H1 (cell line): ENCODE measurements at regions of chr9 and their contacts with region 1.

Region 1: GRCh38 chr9:34701769-34702736 is 7.9 kb downstream of the CCL21 start:
- DNase-seq: peak; percentile 21 to 92
- H3K4me3 ChIP-seq: peak overlapping the region; percentile 38 to 65 (median 45)
- H3K27ac ChIP-seq: no peak overlapping the region
- H3K4me1 ChIP-seq: peaks cover 0 to 5% (median 2%) of the 10 kb centered on the region in 4 experiments; a peak in 2 of 7 replicates
- H3K27me3 ChIP-seq: peaks cover 0 to 30% (median 18%) of the 10 kb centered on the region in 4 experiments; a peak in 6 of 7 replicates
- CTCF ChIP-seq: peak; percentile 97 to 98 (median 98)
- EP300 ChIP-seq: no peak
- POLR2A ChIP-seq: no peak
- RAD21 ChIP-seq: peak; percentile 77 to 81

Region 2: GRCh38 chr9:34463098-34463900 is 238.8 kb before region 1 on chr9:
- CTCF ChIA-PET with region 1: no interaction called
- POLR2A ChIA-PET with region 1: no interaction called
- DNase-seq: no peak
- H3K4me3 ChIP-seq: no peak overlapping the region
- H3K27ac ChIP-seq: no peak overlapping the region
- H3K4me1 ChIP-seq: peaks cover 0 to 5% (median 1%) of the 10 kb centered on the region in 4 experiments; a peak in 3 of 7 replicates
- H3K27me3 ChIP-seq: peaks cover 0 to 2% (median under 1%) of the 10 kb centered on the region in 4 experiments; a peak in 2 of 7 replicates
- CTCF ChIP-seq: no peak
- EP300 ChIP-seq: no peak
- POLR2A ChIP-seq: no peak
- RAD21 ChIP-seq: no peak

Region 3: DNA sequence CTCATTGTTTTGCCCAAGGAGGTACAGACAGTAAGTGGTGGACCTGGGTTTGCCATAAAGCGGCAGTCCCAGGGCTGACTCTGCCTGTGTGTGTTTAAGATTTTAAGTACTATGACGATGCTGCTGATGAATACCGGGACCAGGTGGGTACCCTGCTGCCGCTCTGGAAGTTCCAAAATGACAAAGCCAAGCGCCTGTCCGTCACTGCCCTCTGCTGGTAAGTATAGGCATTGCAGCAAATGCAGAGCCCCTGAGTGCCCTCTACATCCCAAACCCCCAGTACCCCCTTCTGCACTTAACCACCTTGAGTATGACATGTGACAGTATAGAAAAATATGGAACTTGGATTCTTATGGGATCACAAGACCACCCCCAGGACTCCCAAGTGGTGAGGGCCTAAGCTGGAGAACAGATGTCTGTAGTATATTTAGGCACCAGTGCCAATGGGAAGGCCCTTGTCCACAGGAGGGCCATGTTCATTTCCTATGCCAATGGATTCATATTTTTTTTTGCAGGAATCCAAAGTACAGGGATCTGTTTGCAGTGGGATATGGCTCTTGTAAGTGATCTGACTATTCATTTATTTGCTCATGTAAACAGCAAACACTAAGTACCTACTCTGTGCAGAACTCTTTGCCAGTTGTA is 201.3 kb before region 1 on chr9:
- CTCF ChIA-PET with region 1: no interaction called
- POLR2A ChIA-PET with region 1: no interaction called
- DNase-seq: peak in 1 of 2 experiments; percentile 91
- H3K4me3 ChIP-seq: no peak overlapping the region
- H3K27ac ChIP-seq: no peak overlapping the region
- H3K4me1 ChIP-seq: 0 out of 7 replicates have a peak, but pooled peaks cover 0 to 3% (median 0%) of the 10 kb centered on the region in 4 experiments
- H3K27me3 ChIP-seq: no peaks in the 10 kb centered on the region; a peak in 1 of 7 replicates
- CTCF ChIP-seq: peak; percentile 90 to 97 (median 96)
- EP300 ChIP-seq: no peak
- POLR2A ChIP-seq: no peak
- RAD21 ChIP-seq: peak; percentile 92 to 93

Region 4: DNA sequence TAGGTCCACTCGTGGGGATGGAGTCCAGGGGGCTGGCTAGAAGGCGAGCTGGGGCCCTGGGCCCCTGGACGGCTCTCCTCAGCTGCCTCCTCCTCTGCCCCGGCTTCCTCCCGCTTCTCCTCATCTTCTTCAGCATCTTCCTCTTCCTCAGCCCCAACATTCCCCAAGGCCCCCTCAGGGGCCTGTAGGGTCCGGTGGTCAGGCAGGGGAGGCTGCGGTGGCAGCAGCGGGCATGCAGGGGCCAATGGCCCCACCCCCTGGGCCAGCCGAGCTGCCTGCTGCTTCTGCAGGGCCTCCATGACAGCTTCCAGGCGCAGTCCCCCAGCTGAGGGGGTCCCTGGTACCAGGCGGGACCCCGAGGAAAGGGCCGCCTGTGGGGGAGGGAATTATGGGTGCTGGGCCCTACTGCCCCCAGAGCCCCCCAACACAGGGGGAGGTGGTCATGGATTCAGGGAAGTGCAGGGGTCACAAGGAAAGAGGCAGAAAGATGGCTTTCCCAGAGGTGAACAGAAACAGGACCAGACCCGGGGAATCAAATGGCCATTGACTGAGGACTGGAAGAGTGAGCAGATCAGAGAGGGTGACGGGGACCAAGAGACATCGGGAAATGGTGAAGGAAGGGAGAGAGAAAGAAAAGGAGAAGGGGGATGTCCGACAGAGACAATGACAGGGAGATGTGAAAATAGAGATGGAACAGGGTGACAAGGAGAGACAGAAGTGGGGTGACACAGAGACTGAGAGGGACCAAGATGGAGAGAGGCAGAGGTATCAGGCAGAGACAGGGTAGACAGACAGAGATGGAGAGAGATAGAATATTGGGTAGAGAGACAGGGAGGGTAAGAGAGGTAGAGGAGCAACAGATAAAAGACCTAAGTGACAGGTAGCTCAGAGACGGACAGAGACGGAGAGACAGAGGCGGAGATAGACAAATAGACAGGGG is 74.1 kb before region 1 on chr9:
- CTCF ChIA-PET with region 1: no interaction called
- POLR2A ChIA-PET with region 1: no interaction called
- DNase-seq: no peak
- H3K4me3 ChIP-seq: peak overlapping the region; percentile 9 to 59 (median 40)
- H3K27ac ChIP-seq: no peak overlapping the region
- H3K4me1 ChIP-seq: peaks cover 0 to 16% (median 6%) of the 10 kb centered on the region in 4 experiments; a peak in 6 of 7 replicates
- H3K27me3 ChIP-seq: peaks cover 62 to 84% (median 82%) of the 10 kb centered on the region in 4 experiments
- CTCF ChIP-seq: no peak
- EP300 ChIP-seq: no peak
- POLR2A ChIP-seq: no peak
- RAD21 ChIP-seq: no peak

Region 5: GRCh38 chr9:34665381-34666250 is 36.4 kb before region 1 on chr9:
- CTCF ChIA-PET with region 1: interaction called, 27 read pairs
- POLR2A ChIA-PET with region 1: no interaction called
- DNase-seq: peak; percentile 80 to 95
- H3K4me3 ChIP-seq: peak overlapping the region; percentile 59 to 92 (median 81)
- H3K27ac ChIP-seq: peak overlapping the region; percentile 88
- H3K4me1 ChIP-seq: peaks cover 0 to 4% (median 2%) of the 10 kb centered on the region in 4 experiments; a peak in 2 of 7 replicates
- H3K27me3 ChIP-seq: peaks cover 0 to 5% (median 0%) of the 10 kb centered on the region in 4 experiments; a peak in 2 of 7 replicates
- CTCF ChIP-seq: 0 out of 4 replicates have a peak, but pooled peaks of 1 of the 3 experiments have one; percentile 5
- EP300 ChIP-seq: no peak
- POLR2A ChIP-seq: peak in 1 of 2 experiments; percentile 83; a peak in 2 of 3 replicates
- RAD21 ChIP-seq: no peak

Region 6: GRCh38 chr9:34686231-34686630 is 15.8 kb before region 1 on chr9:
- CTCF ChIA-PET with region 1: interaction called, 147 read pairs
- POLR2A ChIA-PET with region 1: interaction called, 3 read pairs
- DNase-seq: no peak
- H3K4me3 ChIP-seq: no peak overlapping the region
- H3K27ac ChIP-seq: no peak overlapping the region
- H3K4me1 ChIP-seq: peaks cover 0 to 3% (median 1%) of the 10 kb centered on the region in 4 experiments; a peak in 2 of 7 replicates
- H3K27me3 ChIP-seq: no peaks in the 10 kb centered on the region
- CTCF ChIP-seq: no peak
- EP300 ChIP-seq: no peak
- POLR2A ChIP-seq: no peak
- RAD21 ChIP-seq: no peak

Region 7: GRCh38 chr9:34717996-34718614 is 16.1 kb after region 1 on chr9:
- CTCF ChIA-PET with region 1: interaction called, 67 read pairs
- POLR2A ChIA-PET with region 1: no interaction called
- DNase-seq: no peak
- H3K4me3 ChIP-seq: no peak overlapping the region
- H3K27ac ChIP-seq: no peak overlapping the region
- H3K4me1 ChIP-seq: 0 out of 7 replicates have a peak, but pooled peaks cover 0 to 4% (median 0%) of the 10 kb centered on the region in 4 experiments
- H3K27me3 ChIP-seq: peaks cover 0 to 3% (median 0%) of the 10 kb centered on the region in 4 experiments; a peak in 3 of 7 replicates
- CTCF ChIP-seq: no peak
- EP300 ChIP-seq: no peak
- POLR2A ChIP-seq: no peak
- RAD21 ChIP-seq: no peak